Posterior vena cava (tissue), 2 donors: ENCODE measurements at regions of chr13 and their contacts with region 1.

Region 1: GRCh38 chr13:44058624-44059215 is 179.0 kb downstream of the LACC1 start:
- DNase-seq: no peak

Region 2: GRCh38 chr13:43136920-43137575 is 921.7 kb before region 1 on chr13:
- intact Hi-C with region 1: loop called in 1 of 2 experiments (anchors 5 kb)
- DNase-seq: no peak

Region 3: DNA sequence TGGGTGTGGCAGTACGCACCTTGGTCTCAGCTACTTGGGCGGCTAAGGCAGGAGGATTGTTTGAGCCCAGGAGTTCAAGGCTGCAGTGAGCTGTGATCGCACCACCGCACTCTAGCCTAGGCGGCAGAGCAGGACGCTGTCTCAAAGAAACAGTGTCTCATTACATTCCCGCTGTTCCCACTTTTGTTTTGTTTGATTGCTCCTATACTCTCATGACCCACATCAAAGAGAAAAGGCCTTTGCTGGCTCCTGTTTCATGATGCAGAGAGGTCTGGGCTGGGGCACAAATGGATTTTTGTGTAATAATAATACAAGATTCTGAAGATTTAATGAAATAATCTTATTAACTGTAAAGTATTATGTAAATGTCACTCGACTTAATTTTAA is 93.3 kb before region 1 on chr13:
- intact Hi-C with region 1: no loop called
- DNase-seq: no peak